T-cell (primary cell): ENCODE measurements at regions of chr2 and their contacts with region 1.

Region 1: GRCh38 chr2:84888401-84889276 is 7.8 kb upstream of the TRABD2A start:
- DNase-seq: peak in 22 of 35 experiments; percentile 27 to 79 (median 46)
- ATAC-seq: peak; percentile 96 to 97 (median 96)
- H3K4me3 ChIP-seq: peak overlapping the region; percentile 45 to 60
- H3K4me3 Mint-ChIP-seq: peak overlapping the region; percentile 70 to 78 (median 72)
- H3K27ac ChIP-seq: peak overlapping the region; percentile 96
- H3K27ac Mint-ChIP-seq: peak overlapping the region; percentile 99
- H3K4me1 ChIP-seq: peaks cover 14 to 23% of the 10 kb centered on the region in 2 experiments
- H3K4me1 Mint-ChIP-seq: peaks cover 43 to 56% (median 48%) of the 10 kb centered on the region in 3 donors
- H3K27me3 ChIP-seq: no peaks in the 10 kb centered on the region
- H3K27me3 Mint-ChIP-seq: no peaks in the 10 kb centered on the region

Region 2: GRCh38 chr2:84874381-84875212 is 14.0 kb before region 1 on chr2:
- CTCF ChIA-PET with region 1: interaction called, 5 to 6 read pairs
- POLR2A ChIA-PET with region 1: interaction called in 1 of 2 experiments, 11 read pairs
- DNase-seq: peak in 4 of 35 experiments; percentile 27 to 67 (median 51)
- ATAC-seq: peak in 1 of 4 experiments; percentile 70
- H3K4me3 ChIP-seq: no peak overlapping the region
- H3K4me3 Mint-ChIP-seq: peak overlapping the region; percentile 17 to 99 (median 18)
- H3K27ac ChIP-seq: peak overlapping the region; percentile 41
- H3K27ac Mint-ChIP-seq: peak overlapping the region; percentile 91 to 94
- H3K4me1 ChIP-seq: peaks cover 29 to 80% of the 10 kb centered on the region in 2 experiments
- H3K4me1 Mint-ChIP-seq: peaks cover 88 to 92% (median 91%) of the 10 kb centered on the region in 3 donors
- H3K27me3 ChIP-seq: no peaks in the 10 kb centered on the region
- H3K27me3 Mint-ChIP-seq: no peaks in the 10 kb centered on the region

Region 3: GRCh38 chr2:85243101-85244072 is 354.7 kb after region 1 on chr2:
- CTCF ChIA-PET with region 1: no interaction called
- POLR2A ChIA-PET with region 1: no interaction called
- DNase-seq: peak in 5 of 35 experiments; percentile 3 to 23 (median 7)
- ATAC-seq: no peak
- H3K4me3 ChIP-seq: no peak overlapping the region
- H3K4me3 Mint-ChIP-seq: no peak overlapping the region
- H3K27ac ChIP-seq: no peak overlapping the region
- H3K27ac Mint-ChIP-seq: no peak overlapping the region
- H3K4me1 ChIP-seq: no peaks in the 10 kb centered on the region
- H3K4me1 Mint-ChIP-seq: peaks cover 5 to 9% (median 5%) of the 10 kb centered on the region in 3 donors
- H3K27me3 ChIP-seq: peaks cover 0 to 17% of the 10 kb centered on the region in 2 experiments
- H3K27me3 Mint-ChIP-seq: peaks cover 18 to 27% of the 10 kb centered on the region in 2 donors